ENCODE measurements at regions of chr2 and their contacts with region 1.

Region 1: GRCh38 chr2:237474931-237475703 is 11.9 kb upstream of the MLPH start:
- DNase-seq: peak; percentile 71 to 85
- ATAC-seq: peak; percentile 80 to 89
- H3K4me3 ChIP-seq: peak overlapping the region; percentile 57
- H3K27ac ChIP-seq: peak overlapping the region; percentile 95 to 100
- H3K4me1 ChIP-seq: peaks cover 36% of the 10 kb centered on the region
- CTCF ChIP-seq: peak; percentile 85
- EP300 ChIP-seq: peak in 1 of 2 experiments; percentile 32; a peak in 1 of 5 replicates
- POLR2A ChIP-seq: peak; percentile 35; the same call in 1 of the 2 replicates
- RAD21 ChIP-seq: peak; percentile 43 to 66

Region 2: GRCh38 chr2:237122214-237122666 is 352.9 kb before region 1 on chr2:
- CTCF ChIA-PET with region 1: interaction called, 12 read pairs
- POLR2A ChIA-PET with region 1: no interaction called
- DNase-seq: peak; percentile 35 to 80
- ATAC-seq: peak; percentile 92 to 97
- H3K4me3 ChIP-seq: no peak overlapping the region
- H3K27ac ChIP-seq: peak overlapping the region; percentile 44 to 73; a peak in 4 of 6 replicates
- H3K4me1 ChIP-seq: peaks cover 6% of the 10 kb centered on the region
- CTCF ChIP-seq: peak; percentile 86
- EP300 ChIP-seq: no peak
- POLR2A ChIP-seq: no peak
- RAD21 ChIP-seq: peak; percentile 91 to 92

Region 3: DNA sequence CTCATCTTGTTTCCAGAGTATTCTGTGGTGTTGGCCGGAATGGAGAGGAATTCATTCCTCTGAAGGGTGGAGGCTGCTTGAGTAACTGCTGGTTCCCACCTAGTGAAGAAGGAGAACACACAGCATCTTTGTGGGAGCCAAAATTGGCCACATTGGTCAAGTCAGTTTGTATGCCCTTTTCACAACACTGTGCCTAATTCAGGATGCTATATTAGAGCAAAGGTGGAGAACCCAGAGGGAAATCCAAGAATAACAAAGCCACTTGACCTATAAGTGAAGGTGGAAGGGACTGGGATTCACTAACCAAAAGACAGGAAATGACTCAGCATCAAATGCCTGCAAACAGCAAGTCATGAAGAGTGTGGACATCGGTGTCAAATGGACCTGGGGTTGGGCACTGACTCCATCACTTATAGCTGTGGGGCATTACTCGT is 15.4 kb before region 1 on chr2:
- CTCF ChIA-PET with region 1: interaction called, 13 read pairs
- POLR2A ChIA-PET with region 1: no interaction called
- DNase-seq: peak in 1 of 2 experiments; percentile 65
- ATAC-seq: peak in 1 of 2 experiments; percentile 59; a peak in 3 of 6 replicates
- H3K4me3 ChIP-seq: no peak overlapping the region
- H3K27ac ChIP-seq: peak overlapping the region in 1 of 2 experiments; percentile 57; a peak in 5 of 6 replicates
- H3K4me1 ChIP-seq: peaks cover 11% of the 10 kb centered on the region
- CTCF ChIP-seq: no peak
- EP300 ChIP-seq: no peak
- POLR2A ChIP-seq: no peak
- RAD21 ChIP-seq: no peak

Region 4: DNA sequence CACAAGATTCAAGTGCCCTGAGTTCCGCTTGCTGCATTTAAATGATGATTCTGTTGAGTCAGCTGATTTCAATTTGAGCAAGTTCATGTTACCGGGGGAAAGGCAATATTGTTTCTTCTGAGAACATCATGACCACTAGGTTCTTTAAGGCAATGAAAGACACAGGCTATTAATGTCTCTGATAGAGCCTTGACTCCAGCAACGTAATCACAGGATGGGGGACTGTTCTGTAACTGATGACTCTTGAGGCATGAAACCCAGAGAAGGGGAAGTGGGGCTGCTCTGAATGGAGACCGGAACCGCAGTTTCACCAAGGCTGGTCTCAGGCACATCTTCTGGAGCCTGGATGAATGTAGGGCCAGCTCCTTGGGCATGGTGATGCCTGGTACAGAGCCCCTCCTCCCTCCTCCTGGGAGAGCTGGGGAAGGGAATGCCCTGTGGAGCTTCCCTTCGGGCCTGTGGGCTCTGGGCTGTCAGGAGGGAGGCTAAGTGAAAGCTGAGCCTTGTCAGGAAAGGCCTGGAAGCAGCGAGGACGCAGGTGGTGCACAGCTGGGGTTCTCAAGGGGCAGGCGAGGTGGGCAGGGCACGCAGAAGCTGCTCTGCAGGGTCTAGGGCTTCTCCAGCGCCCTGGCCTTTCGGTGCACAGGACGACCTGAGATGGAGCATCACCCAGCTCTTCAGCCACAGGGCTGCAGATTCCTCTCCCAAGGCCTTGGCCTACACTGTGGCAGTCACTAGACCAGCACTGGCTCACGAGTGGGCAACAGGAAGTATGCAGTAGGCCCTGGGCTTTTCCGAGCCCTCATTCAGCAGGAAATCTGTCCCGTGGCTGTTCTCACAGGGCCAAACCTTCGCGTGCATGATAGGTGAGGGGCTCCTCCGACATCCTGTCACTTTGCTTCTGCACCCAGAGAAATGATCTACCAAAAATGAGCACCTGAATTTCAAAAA is 54.6 kb after region 1 on chr2:
- CTCF ChIA-PET with region 1: interaction called, 20 read pairs
- POLR2A ChIA-PET with region 1: no interaction called
- DNase-seq: no peak
- ATAC-seq: peak in 1 of 2 experiments; percentile 14; a peak in 3 of 6 replicates
- H3K4me3 ChIP-seq: no peak overlapping the region
- H3K27ac ChIP-seq: peak overlapping the region in 1 of 2 experiments; percentile 21; a peak in 1 of 6 replicates
- H3K4me1 ChIP-seq: peaks cover 12% of the 10 kb centered on the region; the same call in 1 of the 3 replicates
- CTCF ChIP-seq: no peak
- EP300 ChIP-seq: no peak
- POLR2A ChIP-seq: no peak
- RAD21 ChIP-seq: no peak

Region 5: DNA sequence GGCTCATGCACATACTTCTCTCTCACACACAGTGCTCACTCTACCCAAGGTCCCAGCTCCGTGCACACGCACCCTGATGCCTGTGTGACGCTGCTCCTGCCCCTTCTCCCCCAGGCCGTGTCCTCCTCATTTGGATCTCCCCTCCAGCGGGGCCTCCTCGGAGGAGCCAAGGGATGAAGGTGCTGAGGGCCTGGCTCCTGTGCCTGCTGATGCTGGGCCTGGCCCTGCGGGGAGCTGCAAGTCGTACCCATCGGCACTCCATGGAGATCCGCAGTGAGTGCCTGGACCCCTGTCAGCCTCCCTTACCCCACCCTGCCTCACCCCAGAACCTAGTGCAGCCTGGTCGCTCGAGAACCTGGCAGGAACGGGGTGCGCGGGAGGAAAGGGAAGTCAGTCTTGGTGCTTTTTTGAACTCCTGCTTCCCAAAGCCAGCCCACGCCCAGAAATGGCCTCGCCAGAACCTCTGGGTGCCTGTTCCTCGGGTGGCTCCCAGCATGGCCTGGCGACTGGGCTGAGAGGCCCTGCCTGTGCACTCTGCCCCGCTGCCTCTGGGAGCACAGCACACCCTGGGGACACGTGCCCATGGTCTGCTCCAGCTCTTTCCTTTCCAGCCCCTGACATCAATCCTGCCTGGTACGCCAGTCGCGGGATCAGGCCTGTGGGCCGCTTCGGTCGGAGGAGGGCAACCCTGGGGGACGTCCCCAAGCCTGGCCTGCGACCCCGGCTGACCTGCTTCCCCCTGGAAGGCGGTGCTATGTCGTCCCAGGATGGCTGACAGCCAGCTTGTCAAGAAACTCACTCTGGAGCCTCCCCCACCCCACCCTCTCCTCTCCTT is 91.5 kb after region 1 on chr2 and contains the start of gene PRLH:
- CTCF ChIA-PET with region 1: interaction called, 84 read pairs
- POLR2A ChIA-PET with region 1: no interaction called
- DNase-seq: no peak
- ATAC-seq: peak in 1 of 2 experiments; percentile 6; a peak in 1 of 6 replicates
- H3K4me3 ChIP-seq: no peak within 1 kb of the TSS
- H3K27ac ChIP-seq: no peak within 1 kb of the TSS
- H3K4me1 ChIP-seq: peaks cover 1% of the 10 kb centered on the region; the same call in 1 of the 3 replicates
- CTCF ChIP-seq: no peak
- EP300 ChIP-seq: no peak
- POLR2A ChIP-seq: no peak
- RAD21 ChIP-seq: no peak
- polyA plus RNA-seq, gene PRLH: not detected in 2 replicates

Region 6: GRCh38 chr2:237616734-237617586 is 141.8 kb after region 1 on chr2:
- CTCF ChIA-PET with region 1: no interaction called
- POLR2A ChIA-PET with region 1: no interaction called
- DNase-seq: no peak
- ATAC-seq: no peak
- H3K4me3 ChIP-seq: no peak overlapping the region
- H3K27ac ChIP-seq: no peak overlapping the region
- H3K4me1 ChIP-seq: peaks cover 8% of the 10 kb centered on the region
- CTCF ChIP-seq: no peak
- EP300 ChIP-seq: no peak
- POLR2A ChIP-seq: no peak
- RAD21 ChIP-seq: no peak

Region 7: DNA sequence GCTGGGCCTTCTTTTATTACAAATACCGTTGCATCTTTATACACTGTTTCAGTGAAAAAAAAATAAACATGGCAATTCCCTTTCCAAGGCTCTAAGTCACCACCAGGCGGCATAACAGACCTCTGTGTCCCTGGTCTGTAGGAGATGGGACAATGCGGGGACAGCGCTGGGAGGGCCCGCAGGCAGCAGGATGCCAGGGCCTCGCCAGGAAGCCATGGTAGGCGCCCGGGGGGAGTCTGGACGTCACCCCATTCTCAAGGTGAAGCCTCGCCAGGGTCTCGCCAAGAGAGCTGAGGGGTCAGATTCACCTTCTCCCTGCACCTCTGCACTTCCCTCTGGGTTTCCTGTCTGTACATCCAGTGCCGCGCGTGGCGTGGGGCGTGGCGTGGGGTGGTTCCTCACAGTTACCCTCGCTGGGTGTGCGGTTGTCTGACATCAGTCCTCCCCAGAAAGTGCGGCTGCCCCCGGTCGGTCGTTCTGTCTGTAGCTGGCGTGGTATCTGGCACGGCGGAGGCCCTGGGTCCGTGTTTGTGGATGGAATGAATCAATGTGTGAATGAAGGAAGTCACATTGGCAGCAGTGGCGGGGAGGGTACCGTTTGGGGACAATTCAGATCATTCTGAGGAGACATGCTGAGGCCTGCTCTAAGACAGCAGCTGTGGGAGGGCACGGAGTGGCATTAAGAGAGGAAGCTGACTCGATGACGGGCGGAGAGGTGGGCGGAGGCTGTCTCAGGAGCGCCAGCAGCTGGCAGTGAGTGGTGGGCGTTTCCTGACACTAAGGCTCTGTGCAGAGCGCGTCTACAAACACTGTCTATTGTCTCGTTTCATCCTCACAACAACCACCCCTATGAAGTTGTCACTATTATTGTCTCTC is 198.2 kb after region 1 on chr2:
- CTCF ChIA-PET with region 1: no interaction called
- POLR2A ChIA-PET with region 1: no interaction called
- DNase-seq: peak; percentile 76 to 78
- ATAC-seq: peak; percentile 92 to 96
- H3K4me3 ChIP-seq: peak overlapping the region; percentile 45
- H3K27ac ChIP-seq: peak overlapping the region; percentile 35 to 81; a peak in 4 of 6 replicates
- H3K4me1 ChIP-seq: peaks cover 10% of the 10 kb centered on the region; the same call in 2 of the 3 replicates
- CTCF ChIP-seq: peak; percentile 84
- EP300 ChIP-seq: no peak
- POLR2A ChIP-seq: no peak
- RAD21 ChIP-seq: peak; percentile 92 to 93